ENCODE measurements at regions of chr12 and their contacts with region 1.

Region 1: DNA sequence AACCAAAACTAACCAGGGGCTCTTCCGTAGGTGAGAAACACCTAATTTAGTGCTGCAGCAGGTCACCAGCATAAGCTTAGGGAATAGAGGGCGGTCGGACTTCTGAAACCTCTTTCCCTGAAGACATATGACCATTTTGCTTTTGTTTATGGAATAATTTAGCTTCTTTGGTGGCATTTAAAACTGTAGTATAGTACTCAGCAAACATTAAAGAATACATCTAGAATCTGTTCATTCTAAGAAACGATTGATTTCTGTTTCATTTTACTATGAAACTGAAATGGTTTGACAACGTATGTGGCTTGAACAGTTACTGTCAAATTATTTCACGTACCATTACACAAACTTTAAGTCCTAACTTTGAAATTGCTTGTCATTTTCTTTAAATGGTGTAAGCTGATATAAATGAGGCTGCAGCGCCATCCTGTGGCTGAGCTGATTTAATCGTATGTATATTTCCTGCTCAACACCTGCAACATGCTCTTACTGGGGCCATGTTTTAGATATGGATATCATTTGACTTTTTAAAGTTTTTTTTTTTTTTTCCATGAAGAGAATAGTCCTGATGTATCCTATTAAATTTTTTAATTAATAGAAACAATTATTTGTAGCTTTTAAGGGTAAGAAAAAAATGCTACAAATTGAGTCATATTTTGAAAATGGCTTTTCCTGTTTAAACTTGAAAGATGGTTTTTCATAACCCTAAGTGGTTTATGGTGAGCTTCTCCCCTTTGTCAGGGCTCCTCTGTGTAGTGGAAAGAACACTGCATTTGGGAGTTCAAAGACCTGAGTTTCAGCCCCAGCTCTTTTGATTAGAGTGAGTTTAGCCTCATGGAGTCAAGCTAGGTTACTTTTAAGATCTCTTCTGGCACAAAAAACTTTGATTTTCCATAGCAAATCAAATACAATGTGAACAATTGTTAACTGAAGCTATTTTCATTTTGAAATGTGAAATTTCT is 27.4 kb downstream of the CFAP54 start:
- DNase-seq: peak; percentile 80
- ATAC-seq: peak; percentile 69 to 80

Region 2: DNA sequence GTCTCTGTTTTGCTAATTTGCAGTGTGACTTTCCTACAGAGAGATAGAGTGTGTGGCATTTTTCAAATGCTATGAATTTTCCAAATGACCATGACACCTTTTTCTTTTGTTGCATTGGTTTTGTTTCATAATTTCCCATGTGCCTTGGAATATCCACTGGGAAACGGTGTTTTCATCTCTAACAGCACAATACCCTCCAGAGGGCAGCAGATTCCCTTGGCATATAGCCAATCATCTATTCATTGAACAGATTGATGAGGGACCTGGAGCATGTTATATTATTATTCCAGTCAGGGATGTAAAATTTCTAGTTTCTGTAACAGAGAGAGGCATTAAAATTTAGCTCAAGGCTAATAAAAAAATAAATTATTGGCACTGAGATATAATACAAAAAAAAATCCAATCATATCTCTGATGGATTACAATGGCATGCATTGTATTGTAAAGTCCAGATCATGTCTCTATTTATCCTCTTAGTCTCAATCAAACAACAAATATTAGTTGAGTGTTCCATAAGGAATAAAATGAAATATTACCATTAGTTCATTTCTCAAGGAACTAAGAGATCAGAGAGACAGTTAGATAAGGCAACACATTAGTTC is 696.5 kb before region 1 on chr12:
- intact Hi-C with region 1: loop called in 1 of 2 experiments (anchors 10 kb)
- DNase-seq: no peak
- ATAC-seq: peak in 1 of 2 donors; percentile 41

Region 3: GRCh38 chr12:96061864-96062453 is 454.8 kb before region 1 on chr12:
- intact Hi-C with region 1: loop called (anchors 2 to 5 kb)
- DNase-seq: peak; percentile 81
- ATAC-seq: peak; percentile 86 to 90